ENCODE measurements at regions of chr19 and their contacts with region 1.

Region 1: DNA sequence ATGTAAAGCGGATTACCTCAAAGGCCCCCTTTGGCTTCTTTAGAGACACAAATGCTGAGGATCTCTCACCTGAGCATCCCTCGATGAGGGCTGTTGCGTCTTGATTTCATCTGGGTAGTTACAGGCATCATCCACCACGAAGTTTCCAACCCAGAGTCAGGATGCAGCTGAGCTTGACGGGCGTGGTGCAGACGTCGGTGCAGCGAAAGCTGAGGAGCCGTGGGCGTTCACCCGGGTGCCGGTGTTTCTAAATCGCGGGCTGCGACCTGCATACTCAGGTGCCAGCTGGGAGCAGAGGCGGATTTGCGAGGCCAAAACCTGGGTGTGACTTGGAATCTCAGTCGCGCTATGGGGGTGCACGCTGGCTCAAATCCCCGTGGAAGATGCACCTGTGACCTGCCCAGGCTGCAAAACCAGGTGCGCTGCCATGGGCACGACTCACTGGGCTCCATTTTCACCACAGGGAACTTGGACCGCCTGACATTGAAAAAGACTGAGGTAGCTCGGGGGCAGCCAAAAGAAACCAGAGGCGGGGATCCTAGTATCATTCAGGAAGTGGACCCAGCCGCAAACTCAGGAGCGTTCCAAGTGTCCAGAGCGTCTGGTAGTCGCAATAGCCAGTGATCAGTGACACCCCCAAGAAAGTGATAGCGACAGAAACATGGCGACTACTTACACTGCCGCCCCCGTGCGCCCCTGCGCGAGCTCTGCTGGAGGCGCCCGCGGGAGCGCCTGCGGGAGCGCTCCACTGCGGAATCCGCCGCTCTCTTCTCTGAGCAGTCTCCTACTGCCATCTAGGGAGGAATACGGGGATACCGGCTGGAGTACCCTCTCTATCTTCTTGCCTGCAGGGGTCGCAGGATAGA is 36.4 kb upstream of the IGFL4 start:
- DNase-seq: peak; percentile 90
- H3K4me3 ChIP-seq: peak overlapping the region; percentile 39 to 52
- H3K27ac ChIP-seq: no peak overlapping the region
- H3K4me1 ChIP-seq: peaks cover 8 to 20% of the 10 kb centered on the region in 2 experiments; a peak in 2 of 4 replicates
- H3K27me3 ChIP-seq: peaks cover 27% of the 10 kb centered on the region
- CTCF ChIP-seq: peak; percentile 99
- EP300 ChIP-seq: no peak
- RAD21 ChIP-seq: peak; percentile 83

Region 2: GRCh38 chr19:46016426-46017094 is 60.6 kb before region 1 on chr19:
- CTCF ChIA-PET with region 1: interaction called, 14 read pairs
- POLR2A ChIA-PET with region 1: no interaction called
- DNase-seq: peak; percentile 94
- H3K4me3 ChIP-seq: peak overlapping the region; percentile 57 to 68
- H3K27ac ChIP-seq: no peak overlapping the region
- H3K4me1 ChIP-seq: peaks cover 0 to 22% of the 10 kb centered on the region in 2 experiments; a peak in 2 of 4 replicates
- H3K27me3 ChIP-seq: no peaks in the 10 kb centered on the region
- CTCF ChIP-seq: peak; percentile 65
- EP300 ChIP-seq: no peak
- RAD21 ChIP-seq: peak; percentile 46

Region 3: DNA sequence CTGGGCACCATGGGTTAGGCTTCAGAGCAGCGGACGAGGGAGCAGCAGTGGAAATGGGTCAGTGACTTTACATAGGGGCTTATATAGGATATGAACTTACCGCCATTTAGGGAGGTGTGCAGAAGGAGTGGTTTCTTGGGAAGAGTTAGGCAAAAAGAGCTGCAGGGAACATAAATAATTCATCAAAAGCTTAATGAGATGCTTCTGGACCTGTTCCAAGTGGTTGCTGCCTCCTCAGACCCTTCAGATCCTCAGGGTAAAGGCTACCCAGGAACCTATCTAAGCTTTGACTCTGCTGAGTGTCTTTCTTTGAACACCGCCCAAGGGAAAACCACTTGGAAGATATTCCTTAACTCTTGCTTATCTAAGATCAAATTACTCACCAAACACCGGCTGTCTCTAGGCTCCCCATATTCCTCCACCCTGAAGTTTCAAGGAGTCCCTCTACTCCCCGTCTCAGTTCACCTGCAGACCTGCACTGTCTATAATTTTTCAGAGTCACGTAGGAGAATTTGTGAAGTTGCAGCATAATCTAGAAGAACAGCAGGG is 36.2 kb before region 1 on chr19 and contains the start of gene IGFL4:
- CTCF ChIA-PET with region 1: interaction called, 17 read pairs
- POLR2A ChIA-PET with region 1: no interaction called
- DNase-seq: no peak
- H3K4me3 ChIP-seq: no peak within 1 kb of the TSS
- H3K27ac ChIP-seq: no peak within 1 kb of the TSS
- H3K4me1 ChIP-seq: no peaks in the 10 kb centered on the region; a peak in 1 of 4 replicates
- H3K27me3 ChIP-seq: peaks cover 66% of the 10 kb centered on the region; the same call in 1 of the 2 replicates
- CTCF ChIP-seq: no peak
- EP300 ChIP-seq: no peak
- RAD21 ChIP-seq: no peak
- polyA plus RNA-seq, gene IGFL4: not detected in 2 replicates

Region 4: DNA sequence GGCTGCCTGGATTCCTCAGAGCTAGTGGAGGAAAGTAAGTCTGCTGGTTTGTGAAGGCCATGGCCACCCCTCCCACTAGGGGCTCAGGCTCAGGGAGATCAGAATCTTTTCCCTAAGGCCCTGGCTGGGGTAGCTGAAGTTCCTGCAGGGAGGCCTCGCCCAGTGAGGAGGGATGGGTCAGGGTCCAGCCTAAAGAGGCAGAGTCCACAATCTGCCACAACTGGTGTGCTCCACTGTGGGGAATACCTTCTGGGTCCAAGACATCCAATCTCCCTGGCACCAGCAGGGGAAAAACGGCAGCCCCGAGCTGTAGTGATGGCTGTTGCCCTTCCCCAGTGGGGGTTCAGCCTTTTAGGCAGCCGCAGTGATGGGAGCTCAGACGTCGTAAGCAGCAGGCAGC is 24.1 kb after region 1 on chr19:
- CTCF ChIA-PET with region 1: interaction called, 12 read pairs
- POLR2A ChIA-PET with region 1: no interaction called
- DNase-seq: no peak
- H3K4me3 ChIP-seq: no peak overlapping the region
- H3K27ac ChIP-seq: no peak overlapping the region
- H3K4me1 ChIP-seq: no peaks in the 10 kb centered on the region
- H3K27me3 ChIP-seq: peaks cover 13% of the 10 kb centered on the region; the same call in 1 of the 2 replicates
- CTCF ChIP-seq: no peak
- EP300 ChIP-seq: no peak
- RAD21 ChIP-seq: no peak

Region 5: GRCh38 chr19:46265217-46265828 is 188.1 kb after region 1 on chr19:
- CTCF ChIA-PET with region 1: interaction called, 132 read pairs
- POLR2A ChIA-PET with region 1: no interaction called
- DNase-seq: peak; percentile 78
- H3K4me3 ChIP-seq: peak overlapping the region in 1 of 2 experiments; percentile 7; a peak in 1 of 4 replicates
- H3K27ac ChIP-seq: no peak overlapping the region
- H3K4me1 ChIP-seq: no peaks in the 10 kb centered on the region
- H3K27me3 ChIP-seq: peaks cover 30% of the 10 kb centered on the region
- CTCF ChIP-seq: peak; percentile 87
- EP300 ChIP-seq: no peak
- RAD21 ChIP-seq: peak; percentile 90

Measured in SK-N-SH (cell line).